ENCODE measurements at regions of chr14 and their contacts with region 1.

Region 1: DNA sequence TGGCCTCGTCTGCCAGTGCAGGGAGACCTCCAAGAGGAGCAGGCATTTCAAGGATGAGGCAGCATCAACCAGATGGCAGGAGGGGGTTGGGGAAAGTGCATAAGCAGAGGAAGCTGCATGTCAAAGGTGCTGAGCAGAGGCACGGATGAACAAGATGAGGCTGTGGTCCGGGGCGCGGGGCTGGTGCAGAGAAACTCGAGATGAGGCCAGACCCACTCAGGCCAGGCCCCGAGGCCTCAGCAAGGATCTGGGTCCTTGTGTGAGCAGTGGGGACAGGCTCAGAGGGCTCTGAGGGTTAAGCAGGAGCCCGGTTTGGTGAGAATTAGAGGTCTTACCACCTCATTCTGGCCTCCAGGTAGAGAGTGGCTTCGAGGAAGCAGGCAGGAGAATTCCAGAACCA is 98.8 kb downstream of the DICER1 start:
- DNase-seq: no peak
- H3K4me3 ChIP-seq: no peak overlapping the region
- H3K27ac ChIP-seq: no peak overlapping the region
- H3K4me1 ChIP-seq: no peaks in the 10 kb centered on the region
- H3K27me3 ChIP-seq: no peaks in the 10 kb centered on the region
- CTCF ChIP-seq: no peak

Region 2: GRCh38 chr14:94971750-94972149 is 86.7 kb before region 1 on chr14:
- intact Hi-C with region 1: loop called (anchors 1 kb)
- DNase-seq: peak; percentile 73 to 80
- H3K4me3 ChIP-seq: peak overlapping the region; percentile 10 to 16
- H3K27ac ChIP-seq: peak overlapping the region; percentile 65 to 69
- H3K4me1 ChIP-seq: peaks cover 0 to 18% (median 0%) of the 10 kb centered on the region in 4 donors
- H3K27me3 ChIP-seq: no peaks in the 10 kb centered on the region
- CTCF ChIP-seq: no peak

Region 3: DNA sequence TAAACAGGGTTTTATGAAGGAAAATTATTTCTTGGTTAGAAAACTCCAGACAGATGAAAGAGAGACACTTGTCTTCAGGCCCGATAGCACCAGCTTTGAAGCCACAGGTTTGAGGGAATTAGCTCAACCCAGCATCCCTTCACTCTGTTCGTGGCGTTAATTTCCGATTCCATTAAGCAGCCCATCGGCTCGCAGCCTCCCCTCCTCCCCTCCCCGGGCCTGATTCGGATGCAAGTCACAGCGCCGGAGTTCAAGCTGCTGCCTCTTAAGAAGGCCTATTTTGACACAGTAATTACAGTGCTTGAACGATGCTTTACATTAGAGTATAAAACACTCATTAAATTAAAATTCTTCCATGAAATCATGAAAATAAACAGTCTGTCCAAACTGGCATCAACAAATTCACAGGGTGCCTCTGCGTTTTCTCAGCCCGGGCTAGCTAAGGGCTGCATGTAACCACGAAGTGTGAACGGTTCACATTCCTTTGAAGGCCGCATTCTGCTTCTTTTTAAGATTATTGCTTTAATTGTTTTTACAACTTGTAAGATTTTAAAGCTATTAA is 47.0 kb before region 1 on chr14:
- intact Hi-C with region 1: no loop called
- DNase-seq: no peak
- H3K4me3 ChIP-seq: no peak overlapping the region
- H3K27ac ChIP-seq: peak overlapping the region in 1 of 2 donors; percentile 65
- H3K4me1 ChIP-seq: peaks cover 0 to 36% (median 14%) of the 10 kb centered on the region in 4 donors
- H3K27me3 ChIP-seq: no peaks in the 10 kb centered on the region
- CTCF ChIP-seq: no peak

Measured in tibial artery (tissue), 4 donors.